OCI-LY7 (cell line): ENCODE measurements at regions of chr7 and their contacts with region 1.

Region 1: DNA sequence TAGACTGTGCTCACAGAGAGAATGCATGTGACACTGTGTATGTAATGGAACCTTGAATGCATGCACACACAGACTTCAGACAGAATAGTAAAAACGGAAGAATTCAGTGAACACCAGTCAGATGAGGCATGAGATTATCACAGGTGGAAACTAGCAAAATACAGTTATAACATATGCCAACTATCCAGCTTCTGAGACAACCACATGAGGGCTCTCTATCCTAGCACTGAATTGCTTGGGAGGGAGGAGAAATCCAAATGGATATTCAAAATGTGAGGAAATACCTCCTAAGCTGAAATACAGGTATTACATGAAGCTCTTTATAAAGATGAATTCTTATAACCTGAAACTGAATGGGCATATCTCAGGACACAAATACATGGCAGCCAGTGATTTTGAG is 30.6 kb downstream of the GARS1 start:
- DNase-seq: no peak
- H3K4me3 ChIP-seq: no peak overlapping the region
- H3K27ac ChIP-seq: no peak overlapping the region
- H3K4me1 ChIP-seq: peaks cover 7% of the 10 kb centered on the region
- CTCF ChIP-seq: no peak

Region 2: DNA sequence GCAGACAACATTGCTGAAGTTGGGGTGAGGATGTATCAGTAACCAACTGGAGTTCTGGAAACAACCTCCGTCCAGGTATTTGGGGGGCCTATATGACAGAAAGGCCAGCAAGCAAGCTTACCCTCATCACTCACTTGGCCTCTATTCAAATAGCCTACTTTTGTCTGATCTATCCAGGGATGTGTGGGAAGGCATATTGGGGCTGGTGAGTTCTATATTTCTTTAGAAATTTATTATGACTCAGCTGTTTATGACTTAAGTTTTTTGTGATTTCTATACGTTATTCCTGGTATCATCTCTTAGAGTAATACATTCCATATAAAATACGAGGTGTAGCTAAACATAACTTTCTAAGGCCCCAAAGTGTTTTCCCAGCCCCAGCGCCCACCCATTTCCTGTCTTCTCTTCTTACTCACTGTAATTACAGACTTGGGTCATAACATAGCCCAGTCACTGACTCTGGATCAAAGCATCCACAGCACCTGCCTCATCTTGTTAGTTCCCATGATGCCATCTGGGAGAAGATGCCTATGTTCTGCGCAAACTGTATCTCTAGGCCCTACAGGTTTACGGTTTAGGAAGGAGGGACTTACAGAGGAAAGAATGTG is 12.5 kb before region 1 on chr7:
- CTCF ChIA-PET with region 1: no interaction called
- POLR2A ChIA-PET with region 1: interaction called, 5 read pairs
- intact Hi-C with region 1: loop called (anchors 2 kb)
- DNase-seq: no peak
- H3K4me3 ChIP-seq: no peak overlapping the region
- H3K27ac ChIP-seq: no peak overlapping the region
- H3K4me1 ChIP-seq: no peaks in the 10 kb centered on the region
- CTCF ChIP-seq: no peak